ENCODE measurements at regions of chr1 and their contacts with region 1.

Region 1: DNA sequence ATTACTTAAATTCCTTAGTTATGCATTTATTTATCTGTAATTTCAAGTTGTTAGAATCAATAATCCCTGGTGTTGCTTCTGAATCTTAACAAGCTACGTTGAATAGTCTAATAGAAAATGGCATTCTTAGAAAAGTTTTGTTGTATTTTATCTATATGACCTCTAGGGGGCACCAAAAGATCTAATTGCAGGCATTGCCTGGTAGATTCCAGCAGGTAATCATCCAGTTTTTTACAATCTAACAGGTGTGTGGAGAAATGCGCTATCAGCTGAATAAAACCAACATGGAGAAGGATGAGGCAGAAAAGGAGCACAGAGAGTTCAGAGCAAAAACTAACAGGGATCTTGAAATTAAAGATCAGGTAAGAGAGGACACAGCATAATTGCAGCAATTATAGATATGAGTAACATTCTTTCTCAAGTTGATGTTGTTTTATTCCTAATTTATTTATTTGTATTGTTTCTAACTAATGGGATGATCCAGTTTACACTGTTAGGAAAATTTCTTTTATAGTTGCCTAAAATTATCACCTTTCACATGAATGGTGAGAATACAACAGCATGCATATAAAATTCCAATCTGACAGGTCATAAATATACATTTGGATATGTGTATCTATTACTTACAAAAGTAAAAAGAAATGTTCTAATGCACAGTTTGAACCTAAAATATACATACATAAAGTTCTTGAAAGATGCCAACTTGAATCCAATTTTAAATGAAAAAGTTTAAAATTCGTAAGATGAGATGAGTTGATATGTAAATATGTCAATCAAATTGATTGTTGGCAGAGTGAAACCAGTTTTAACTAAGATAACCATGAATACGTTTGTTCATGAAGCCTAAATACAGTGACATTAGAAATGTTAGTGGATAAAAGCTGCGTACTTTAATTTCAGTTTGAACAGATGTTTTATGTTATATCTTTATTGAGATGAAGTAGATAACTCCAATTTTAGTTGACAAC is 88.4 kb downstream of the SDCCAG8 start:
- DNase-seq: peak; percentile 40
- ATAC-seq: peak; percentile 62; the same call in 1 of the 2 replicates
- H3K4me3 ChIP-seq: no peak overlapping the region
- H3K27ac ChIP-seq: no peak overlapping the region
- H3K4me1 ChIP-seq: no peaks in the 10 kb centered on the region
- H3K27me3 ChIP-seq: no peaks in the 10 kb centered on the region
- CTCF ChIP-seq: peak; percentile 72
- POLR2A ChIP-seq: no peak
- RAD21 ChIP-seq: peak; percentile 78

Region 2: GRCh38 chr1:243354511-243355153 is 10.4 kb after region 1 on chr1:
- CTCF ChIA-PET with region 1: interaction called, 12 read pairs
- POLR2A ChIA-PET with region 1: no interaction called
- dilution Hi-C with region 1: no loop called
- in situ Hi-C with region 1: no loop called
- intact Hi-C with region 1: no loop called
- DNase-seq: peak; percentile 21
- ATAC-seq: peak; percentile 62
- H3K4me3 ChIP-seq: peak overlapping the region; percentile 27; the same call in 1 of the 2 replicates
- H3K27ac ChIP-seq: no peak overlapping the region
- H3K4me1 ChIP-seq: no peaks in the 10 kb centered on the region
- H3K27me3 ChIP-seq: no peaks in the 10 kb centered on the region
- CTCF ChIP-seq: no peak
- POLR2A ChIP-seq: no peak
- RAD21 ChIP-seq: no peak

Region 3: GRCh38 chr1:243378669-243379068 is 34.4 kb after region 1 on chr1:
- CTCF ChIA-PET with region 1: no interaction called
- POLR2A ChIA-PET with region 1: no interaction called
- dilution Hi-C with region 1: no loop called
- in situ Hi-C with region 1: no loop called
- intact Hi-C with region 1: no loop called
- DNase-seq: no peak
- ATAC-seq: no peak
- H3K4me3 ChIP-seq: no peak overlapping the region
- H3K27ac ChIP-seq: no peak overlapping the region
- H3K4me1 ChIP-seq: no peaks in the 10 kb centered on the region
- H3K27me3 ChIP-seq: no peaks in the 10 kb centered on the region
- CTCF ChIP-seq: no peak
- POLR2A ChIP-seq: no peak
- RAD21 ChIP-seq: no peak

Region 4: GRCh38 chr1:243708210-243708609 is 364.0 kb after region 1 on chr1:
- CTCF ChIA-PET with region 1: no interaction called
- POLR2A ChIA-PET with region 1: no interaction called
- dilution Hi-C with region 1: no loop called
- in situ Hi-C with region 1: no loop called
- intact Hi-C with region 1: loop called (anchors 5 kb)
- DNase-seq: no peak
- ATAC-seq: no peak
- H3K4me3 ChIP-seq: no peak overlapping the region
- H3K27ac ChIP-seq: no peak overlapping the region
- H3K4me1 ChIP-seq: peaks cover 2% of the 10 kb centered on the region; the same call in 1 of the 2 replicates
- H3K27me3 ChIP-seq: no peaks in the 10 kb centered on the region
- CTCF ChIP-seq: peak; percentile 42
- POLR2A ChIP-seq: no peak
- RAD21 ChIP-seq: peak; percentile 50

Region 5: DNA sequence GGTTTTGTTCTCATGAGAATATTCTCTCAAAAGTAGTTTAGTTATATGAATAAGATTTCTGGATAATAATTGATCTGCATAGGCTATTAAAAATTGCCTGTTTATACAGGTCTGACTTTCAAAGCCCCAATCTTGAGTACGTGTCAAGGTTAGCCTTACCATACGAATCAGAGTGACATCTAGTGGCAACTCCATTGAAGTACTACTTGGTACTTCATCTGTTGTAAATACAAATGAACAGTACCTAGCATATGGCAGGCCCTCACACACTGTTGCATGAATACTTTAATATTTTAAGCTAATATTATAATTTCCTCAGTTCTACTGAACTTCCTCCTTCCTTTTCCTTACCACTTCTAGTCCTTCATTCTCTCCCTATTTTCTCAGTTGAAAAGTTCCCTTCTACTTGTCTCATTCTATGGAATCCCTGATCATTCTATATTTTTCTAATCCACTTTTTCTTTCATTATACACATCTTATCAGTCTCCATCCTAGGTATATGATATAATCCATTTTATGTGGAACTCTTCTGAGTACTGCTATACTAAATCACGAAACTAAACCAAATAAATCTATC is 404.5 kb after region 1 on chr1:
- CTCF ChIA-PET with region 1: interaction called, 4 read pairs
- POLR2A ChIA-PET with region 1: no interaction called
- dilution Hi-C with region 1: no loop called
- in situ Hi-C with region 1: no loop called
- intact Hi-C with region 1: loop called (anchors 1 kb)
- DNase-seq: peak; percentile 88
- ATAC-seq: peak; percentile 98
- H3K4me3 ChIP-seq: no peak overlapping the region
- H3K27ac ChIP-seq: no peak overlapping the region
- H3K4me1 ChIP-seq: peaks cover 7% of the 10 kb centered on the region
- H3K27me3 ChIP-seq: no peaks in the 10 kb centered on the region
- CTCF ChIP-seq: peak; percentile 78
- POLR2A ChIP-seq: no peak
- RAD21 ChIP-seq: peak; percentile 84

Region 6: GRCh38 chr1:243850452-243851256 is 506.4 kb after region 1 on chr1:
- CTCF ChIA-PET with region 1: no interaction called
- POLR2A ChIA-PET with region 1: no interaction called
- dilution Hi-C with region 1: no loop called
- in situ Hi-C with region 1: no loop called
- intact Hi-C with region 1: loop called (anchors 2 kb)
- DNase-seq: peak; percentile 70
- ATAC-seq: peak; percentile 73
- H3K4me3 ChIP-seq: peak overlapping the region; percentile 86
- H3K27ac ChIP-seq: peak overlapping the region; percentile 78
- H3K4me1 ChIP-seq: no peaks in the 10 kb centered on the region; the same call in 1 of the 2 replicates
- H3K27me3 ChIP-seq: no peaks in the 10 kb centered on the region
- CTCF ChIP-seq: no peak
- POLR2A ChIP-seq: peak; percentile 66; the same call in 1 of the 2 replicates
- RAD21 ChIP-seq: no peak

Region 7: DNA sequence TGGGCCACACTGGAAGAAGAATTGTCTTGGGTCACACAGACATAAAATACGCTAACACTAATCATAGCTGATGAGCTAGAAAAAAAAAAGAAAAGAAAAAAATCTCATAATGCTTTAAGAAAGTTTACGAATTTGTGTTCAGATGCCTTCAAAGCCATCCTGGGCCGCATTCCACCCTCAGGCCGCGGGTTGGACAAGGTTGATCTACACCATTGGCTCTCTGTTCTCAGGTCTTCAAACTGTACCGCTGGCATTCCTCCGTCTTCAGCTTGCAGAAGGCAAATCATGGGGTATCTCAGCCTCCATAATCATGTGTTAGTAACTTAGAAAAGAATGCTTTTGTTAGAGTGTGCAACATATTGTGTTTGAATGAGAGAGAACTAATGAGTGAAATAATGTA is 520.7 kb after region 1 on chr1:
- CTCF ChIA-PET with region 1: no interaction called
- POLR2A ChIA-PET with region 1: no interaction called
- dilution Hi-C with region 1: no loop called
- in situ Hi-C with region 1: no loop called
- intact Hi-C with region 1: no loop called
- DNase-seq: no peak
- ATAC-seq: no peak
- H3K4me3 ChIP-seq: no peak overlapping the region
- H3K27ac ChIP-seq: no peak overlapping the region
- H3K4me1 ChIP-seq: no peaks in the 10 kb centered on the region
- H3K27me3 ChIP-seq: peaks cover 3% of the 10 kb centered on the region
- CTCF ChIP-seq: no peak
- POLR2A ChIP-seq: no peak
- RAD21 ChIP-seq: no peak

Region 8: DNA sequence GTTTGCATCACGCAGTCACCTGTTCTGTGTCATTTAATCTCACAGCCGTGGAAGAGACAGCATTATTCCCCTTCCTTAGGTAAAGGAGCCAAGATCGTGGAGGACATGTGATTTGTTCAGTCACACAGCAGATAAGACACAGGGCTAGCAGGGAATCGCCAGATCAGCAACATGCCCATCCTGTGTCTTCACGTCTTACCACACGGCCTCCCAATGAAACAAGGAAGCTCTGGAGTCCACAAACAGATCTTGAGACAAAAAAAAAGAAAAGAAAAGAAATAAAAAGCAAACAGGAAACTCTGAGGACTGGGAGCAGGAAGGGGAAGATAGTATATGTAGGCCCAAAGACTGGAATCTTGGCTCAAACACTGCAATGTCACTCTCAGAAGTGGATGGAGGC is 952.2 kb after region 1 on chr1:
- CTCF ChIA-PET with region 1: no interaction called
- POLR2A ChIA-PET with region 1: no interaction called
- dilution Hi-C with region 1: no loop called
- in situ Hi-C with region 1: no loop called
- intact Hi-C with region 1: loop called (anchors 2 kb)
- DNase-seq: no peak
- ATAC-seq: no peak
- H3K4me3 ChIP-seq: no peak overlapping the region
- H3K27ac ChIP-seq: no peak overlapping the region
- H3K4me1 ChIP-seq: no peaks in the 10 kb centered on the region
- H3K27me3 ChIP-seq: no peaks in the 10 kb centered on the region
- CTCF ChIP-seq: no peak
- POLR2A ChIP-seq: no peak
- RAD21 ChIP-seq: no peak